ENCODE measurements at regions of chr7 and their contacts with region 1.

Region 1: DNA sequence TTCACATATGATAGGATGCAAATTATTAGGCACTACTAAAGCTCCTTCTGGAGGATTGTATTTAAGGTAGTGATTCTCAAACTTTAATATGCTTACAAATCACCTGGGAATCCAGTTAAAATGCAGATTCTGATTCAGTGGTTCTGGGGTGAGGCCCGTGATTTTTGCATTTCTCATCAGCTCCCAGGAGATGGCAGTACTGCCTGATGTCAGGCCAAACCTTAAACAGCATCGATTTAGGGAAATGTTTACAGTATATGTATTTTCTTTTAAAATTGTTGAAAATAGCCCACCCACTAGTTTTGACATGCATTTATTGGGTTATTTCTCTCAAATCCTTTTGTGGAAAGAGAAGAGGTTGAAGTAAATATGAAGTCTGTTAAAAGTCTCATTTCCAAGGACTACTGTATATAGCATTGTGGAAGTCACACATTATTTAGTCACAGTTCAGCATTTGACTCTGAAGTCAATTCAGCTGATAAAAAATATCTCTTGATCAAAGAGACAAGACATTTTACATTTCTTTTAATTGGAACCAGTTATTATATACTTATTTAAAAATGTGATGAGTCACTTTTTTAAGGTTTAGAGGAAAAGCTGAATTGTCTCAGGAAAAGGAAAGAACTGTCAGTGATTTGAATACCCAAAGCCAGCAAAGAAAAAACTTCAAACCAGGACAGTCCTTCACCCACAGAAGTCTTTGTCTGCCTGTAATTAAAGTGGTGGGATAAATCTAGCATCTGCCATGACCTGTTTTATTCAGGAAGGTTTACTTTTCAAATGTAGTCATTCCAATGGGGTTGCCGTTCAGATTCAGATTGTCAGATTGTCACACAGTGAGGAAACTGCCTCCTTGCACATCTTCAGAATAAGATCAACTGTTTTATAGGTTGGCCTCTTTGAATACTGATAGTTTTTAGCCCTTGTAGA is 21.1 kb upstream of the HBP1 start:
- DNase-seq: peak; percentile 44

Region 2: GRCh38 chr7:106659963-106660861 is 487.5 kb before region 1 on chr7:
- in situ Hi-C with region 1: no loop called
- DNase-seq: peak; percentile 93

Region 3: DNA sequence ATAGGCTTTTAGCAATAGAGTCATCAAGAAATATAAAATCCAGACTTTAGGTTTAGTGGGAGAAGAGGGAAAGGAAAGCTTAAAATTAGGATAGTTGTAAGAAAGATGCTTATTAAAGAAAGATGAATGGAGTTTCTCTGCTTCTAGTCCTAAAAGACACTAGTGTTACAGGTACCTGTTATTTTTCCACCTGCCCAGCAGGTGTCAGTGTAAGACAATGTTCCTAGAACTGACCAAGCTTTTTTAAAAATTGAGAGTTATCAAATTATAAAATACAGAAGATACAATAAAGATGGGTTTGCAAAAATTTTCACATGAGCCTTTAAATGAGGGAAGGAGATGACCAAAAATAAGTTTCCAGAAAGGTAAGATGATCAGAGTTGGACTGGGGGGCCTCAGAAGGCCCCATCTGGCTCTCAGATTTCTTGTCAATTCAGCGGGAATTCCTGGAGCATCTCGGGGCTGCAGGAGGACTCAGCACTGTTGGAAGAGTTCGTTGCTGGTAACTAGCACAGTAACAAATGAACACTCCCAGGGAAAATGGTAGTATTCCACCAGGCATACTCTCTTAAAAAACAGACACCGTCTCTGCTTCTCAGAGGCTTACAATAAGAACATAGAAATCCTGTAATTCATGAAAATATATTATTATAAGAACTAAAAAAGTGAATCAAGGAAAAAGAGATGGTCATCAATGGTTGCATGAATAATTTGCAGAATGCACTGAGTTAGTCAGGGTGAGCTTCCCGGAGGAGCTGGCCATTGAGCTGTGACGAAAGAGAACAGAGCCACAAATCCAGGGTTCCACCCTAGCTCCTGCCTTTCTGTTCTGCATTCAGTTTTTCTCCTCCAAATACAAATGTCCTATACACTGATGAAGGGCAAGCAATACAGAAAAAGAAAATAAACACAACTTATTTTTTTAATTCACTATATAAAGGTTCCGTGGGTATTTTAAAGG is 354.4 kb before region 1 on chr7:
- in situ Hi-C with region 1: loop called (anchors 25 kb)
- DNase-seq: peak; percentile 28

Region 4: DNA sequence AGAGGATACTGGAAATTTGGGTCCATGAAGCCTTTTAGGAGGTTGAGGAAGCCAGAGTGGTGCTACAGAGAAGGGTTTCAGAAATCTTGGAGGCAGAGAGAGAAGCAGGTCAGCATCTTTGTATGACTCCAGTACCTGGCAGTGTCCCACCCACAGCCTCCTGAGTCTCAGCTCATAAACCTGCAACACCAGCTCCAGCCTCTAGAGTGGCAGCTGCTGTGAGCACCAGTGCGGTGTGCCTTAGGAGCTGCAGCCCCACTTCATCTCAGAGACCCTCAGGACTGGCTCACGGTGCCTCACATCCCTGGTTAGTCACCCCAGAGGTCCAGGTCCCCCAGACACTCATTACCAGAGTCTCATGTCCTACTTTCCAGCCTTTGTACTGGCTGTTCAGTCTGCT is 188.0 kb before region 1 on chr7:
- in situ Hi-C with region 1: loop called (anchors 10 kb)
- DNase-seq: no peak

Region 5: DNA sequence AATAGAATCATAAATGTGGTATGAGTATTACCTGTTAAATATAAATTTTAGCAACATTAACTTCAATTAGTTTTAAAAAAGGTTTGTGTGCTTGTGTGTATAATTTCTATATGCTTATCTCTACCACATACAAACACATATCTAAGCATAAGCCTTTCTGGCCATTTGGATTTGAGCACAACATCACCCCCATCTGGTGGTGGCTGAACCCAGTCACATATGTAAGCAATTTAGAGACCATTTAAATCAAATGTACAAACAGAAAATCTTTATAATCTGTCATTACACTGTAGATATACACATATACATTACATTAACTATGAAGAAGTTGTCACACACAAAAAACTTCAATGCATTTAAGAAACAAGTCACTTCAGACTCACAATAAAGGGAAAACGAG is 353.9 kb after region 1 on chr7:
- in situ Hi-C with region 1: no loop called
- DNase-seq: peak; percentile 47